GM18951 (cell line): ENCODE measurements at regions of chr6 and their contacts with region 1.

Region 1: DNA sequence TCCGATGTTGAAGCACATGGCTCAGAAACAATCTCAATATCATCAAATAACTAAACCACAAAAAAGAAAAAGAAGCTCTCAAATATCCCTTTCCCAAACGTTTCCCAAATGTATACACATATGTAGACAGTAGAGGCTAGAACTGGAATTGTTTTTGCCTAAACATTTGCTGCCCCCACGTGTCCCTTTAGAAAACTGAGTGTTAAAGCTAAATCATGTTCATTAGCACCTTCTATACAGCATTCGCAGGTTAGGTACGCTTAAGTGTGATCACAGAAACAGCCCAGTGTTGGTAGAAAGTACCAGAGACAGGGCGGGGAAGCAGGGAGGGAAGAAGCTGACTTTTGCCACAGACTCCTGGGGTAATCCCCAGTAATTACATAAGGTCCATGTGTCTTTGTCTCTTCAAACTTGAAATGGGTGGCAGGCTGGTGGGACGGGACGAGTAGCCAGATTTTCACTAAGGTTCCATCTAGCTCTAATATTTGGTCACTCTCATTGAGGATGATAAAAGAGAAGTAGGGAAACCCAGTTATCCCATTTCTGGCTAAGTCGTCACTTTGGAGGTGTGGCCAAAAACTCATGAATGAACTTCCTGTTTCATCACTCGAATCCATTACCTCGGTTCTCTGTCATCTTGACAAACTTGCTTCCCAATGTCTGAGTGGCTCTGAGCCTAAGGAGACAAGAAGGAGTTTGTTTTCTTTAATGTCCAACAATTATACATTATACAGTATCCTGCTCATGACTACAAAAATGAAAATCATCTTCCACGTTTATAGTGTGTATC is 15.0 kb upstream of the TFAP2A start:
- POLR2A ChIP-seq: no peak

Region 2: DNA sequence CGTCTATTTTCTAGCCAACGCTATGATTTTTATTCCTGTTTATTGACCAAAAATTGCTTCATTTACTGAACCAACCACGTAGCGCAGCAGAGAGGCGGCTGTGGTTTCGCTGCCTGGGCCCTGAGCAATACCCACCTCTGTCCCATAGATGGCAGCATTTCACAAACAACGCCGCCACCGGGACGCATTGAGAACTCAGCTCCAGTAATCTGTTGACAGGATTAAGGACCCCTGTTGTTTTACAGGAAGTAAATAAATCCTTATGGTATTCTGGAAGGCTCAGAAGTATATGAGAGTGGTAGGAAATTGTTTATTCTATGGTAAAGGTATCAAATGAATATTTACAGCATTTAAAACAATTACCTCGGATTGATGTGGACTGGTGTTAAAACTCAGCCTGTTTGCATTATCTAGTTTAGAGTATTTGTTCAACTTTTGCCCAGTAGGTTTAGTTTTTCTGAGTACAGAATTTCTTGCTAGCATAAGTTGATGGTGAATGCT is 1446.6 kb before region 1 on chr6:
- in situ Hi-C with region 1: loop called (anchors 25 kb)
- POLR2A ChIP-seq: no peak

Region 3: DNA sequence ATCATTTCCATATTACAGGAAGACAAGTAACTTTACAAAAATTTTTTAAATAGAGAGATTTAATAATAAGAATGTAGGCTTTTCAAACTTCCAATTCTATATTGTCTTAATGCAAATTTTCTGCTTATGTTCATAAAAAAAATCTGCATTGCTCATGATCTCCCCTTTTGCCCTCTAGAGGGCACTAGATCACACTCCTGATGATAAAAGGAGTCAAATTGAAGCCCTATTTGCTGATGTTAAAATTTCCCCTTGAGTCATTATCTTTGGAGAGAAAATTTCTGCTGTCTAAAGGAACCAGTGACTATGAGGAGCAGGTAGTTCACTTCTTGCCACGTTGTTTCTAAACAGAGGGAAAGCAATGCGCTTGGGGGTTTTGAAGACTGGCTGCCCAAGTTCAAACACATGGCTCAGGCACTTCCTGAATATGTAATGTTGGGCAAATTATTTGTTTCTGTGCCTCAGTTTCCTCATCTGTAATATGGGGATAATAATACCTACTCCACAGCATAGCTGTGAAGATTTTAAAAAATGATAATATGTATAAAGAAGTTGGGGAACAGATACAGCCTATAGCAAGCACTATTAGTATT is 889.2 kb before region 1 on chr6:
- in situ Hi-C with region 1: loop called (anchors 25 kb)
- POLR2A ChIP-seq: no peak

Region 4: GRCh38 chr6:10030942-10031537 is 398.8 kb before region 1 on chr6:
- in situ Hi-C with region 1: loop called (anchors 25 kb)
- POLR2A ChIP-seq: no peak